ENCODE measurements at regions of chr10 and their contacts with region 1.

Region 1: DNA sequence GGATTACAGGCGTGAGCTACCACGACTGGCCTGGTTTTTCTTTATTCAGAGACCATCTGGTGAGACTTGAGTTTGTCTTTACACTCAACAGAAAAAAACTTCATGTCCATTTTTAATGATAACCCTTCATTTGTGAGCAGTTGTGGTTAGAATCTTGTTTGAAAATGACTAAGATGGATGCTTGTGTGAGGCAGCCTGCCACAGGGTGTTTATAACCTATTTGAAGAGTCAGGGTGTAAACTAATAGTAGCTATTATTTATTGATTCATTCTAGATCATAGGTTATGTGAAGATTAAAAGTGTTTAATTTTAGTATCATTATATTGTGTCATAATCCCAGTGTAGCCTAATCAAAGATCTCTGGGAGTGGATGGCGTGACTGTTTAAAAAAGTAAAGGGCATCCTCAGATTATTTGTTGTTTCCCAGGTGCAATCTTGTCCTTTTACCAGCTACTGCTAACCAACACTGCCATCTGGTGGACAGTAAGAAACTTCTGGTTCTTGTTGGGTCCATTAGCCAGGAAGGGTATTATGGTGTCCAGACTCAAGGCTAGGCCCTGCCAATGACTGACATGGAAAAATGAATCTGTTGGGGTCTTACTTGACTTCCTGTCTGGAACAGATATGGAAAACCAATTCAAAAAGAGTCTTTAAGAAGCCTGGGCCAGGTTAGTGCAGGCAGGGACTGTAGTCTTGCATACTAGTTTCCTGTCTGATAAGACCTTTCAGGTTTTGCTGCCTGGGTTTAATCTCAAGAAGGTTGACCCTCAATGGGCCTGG is 24.9 kb downstream of the NRBF2 start:
- DNase-seq: peak; percentile 25
- ATAC-seq: peak; percentile 65
- H3K4me3 Mint-ChIP-seq: no peak overlapping the region
- H3K27ac Mint-ChIP-seq: no peak overlapping the region; the same call in 1 of the 2 replicates
- H3K4me1 Mint-ChIP-seq: 0 out of 2 replicates have a peak, but pooled peaks cover 4% of the 10 kb centered on the region
- H3K27me3 Mint-ChIP-seq: no peaks in the 10 kb centered on the region
- CTCF ChIP-seq: peak; percentile 51; the same call in 1 of the 2 replicates

Region 2: DNA sequence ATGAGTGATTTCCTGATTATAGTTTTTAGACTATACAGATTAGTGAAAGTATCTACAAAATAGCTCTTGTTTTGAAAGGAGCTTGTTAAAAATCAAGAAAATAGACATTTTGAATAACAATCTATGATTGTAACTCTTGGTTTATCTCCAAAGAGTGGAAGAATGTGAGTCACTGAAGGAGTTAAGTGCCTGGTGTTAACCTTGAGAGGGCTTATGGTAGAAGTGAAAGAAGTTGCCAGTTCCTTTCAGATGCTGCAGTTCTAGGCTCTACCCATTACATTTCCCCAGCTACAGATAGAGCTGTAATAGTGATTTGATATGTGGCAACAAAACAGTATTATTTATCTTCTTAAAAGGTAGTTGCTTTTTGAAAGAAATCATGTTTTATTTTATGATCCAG is 12.3 kb before region 1 on chr10:
- CTCF ChIA-PET with region 1: interaction called, 11 read pairs
- POLR2A ChIA-PET with region 1: interaction called, 6 read pairs
- DNase-seq: no peak
- ATAC-seq: no peak
- H3K4me3 Mint-ChIP-seq: no peak overlapping the region
- H3K27ac Mint-ChIP-seq: no peak overlapping the region
- H3K4me1 Mint-ChIP-seq: peaks cover 19% of the 10 kb centered on the region
- H3K27me3 Mint-ChIP-seq: no peaks in the 10 kb centered on the region
- CTCF ChIP-seq: no peak

Measured in WTC11 (cell line).